ENCODE measurements at regions of chr5 and their contacts with region 1.

Region 1: GRCh38 chr5:42889311-42889933 is 77.7 kb upstream of the SELENOP start:
- DNase-seq: peak; percentile 80
- H3K4me3 ChIP-seq: no peak overlapping the region
- H3K27ac ChIP-seq: no peak overlapping the region
- H3K4me1 ChIP-seq: no peaks in the 10 kb centered on the region
- H3K27me3 ChIP-seq: no peaks in the 10 kb centered on the region
- CTCF ChIP-seq: peak; percentile 93

Region 2: GRCh38 chr5:41856644-41857491 is 1032.6 kb before region 1 on chr5:
- CTCF ChIA-PET with region 1: interaction called, 3 read pairs
- POLR2A ChIA-PET with region 1: no interaction called
- intact Hi-C with region 1: loop called (anchors 5 kb)
- DNase-seq: peak; percentile 77
- H3K4me3 ChIP-seq: no peak overlapping the region
- H3K27ac ChIP-seq: peak overlapping the region; percentile 11
- H3K4me1 ChIP-seq: no peaks in the 10 kb centered on the region
- H3K27me3 ChIP-seq: no peaks in the 10 kb centered on the region
- CTCF ChIP-seq: peak; percentile 74

Region 3: DNA sequence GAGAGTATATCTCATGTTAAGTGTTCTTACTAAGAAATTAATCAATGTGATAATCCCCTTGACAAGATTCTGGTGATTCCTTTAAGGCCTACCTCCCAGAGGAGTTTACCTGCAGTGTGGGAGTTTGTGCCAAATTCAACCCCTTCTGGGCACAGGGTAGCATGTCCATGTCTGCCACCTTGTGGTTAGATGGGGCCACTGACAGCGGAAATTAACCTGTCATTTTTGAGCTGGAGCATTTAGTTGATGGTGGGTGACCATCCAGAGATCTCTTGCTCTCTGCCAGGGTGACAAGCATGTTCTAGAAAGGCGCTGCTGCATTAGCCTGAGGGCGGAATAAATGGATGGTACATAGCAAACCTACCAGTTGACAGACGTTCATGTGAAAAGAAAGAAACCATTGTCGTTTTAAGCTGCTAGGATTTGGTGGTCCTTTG is 832.1 kb before region 1 on chr5:
- CTCF ChIA-PET with region 1: interaction called, 3 read pairs
- POLR2A ChIA-PET with region 1: no interaction called
- intact Hi-C with region 1: loop called (anchors 10 kb)
- DNase-seq: peak; percentile 58
- H3K4me3 ChIP-seq: no peak overlapping the region
- H3K27ac ChIP-seq: no peak overlapping the region
- H3K4me1 ChIP-seq: no peaks in the 10 kb centered on the region
- H3K27me3 ChIP-seq: peaks cover 11% of the 10 kb centered on the region
- CTCF ChIP-seq: peak; percentile 82

Region 4: GRCh38 chr5:42423285-42424165 is 465.9 kb before region 1 on chr5 and contains the start of gene GHR:
- CTCF ChIA-PET with region 1: interaction called, 18 read pairs
- POLR2A ChIA-PET with region 1: no interaction called
- intact Hi-C with region 1: loop called (anchors 2 kb)
- DNase-seq: peak; percentile 89
- H3K4me3 ChIP-seq: peak within 1 kb of the TSS; percentile 47
- H3K27ac ChIP-seq: no peak within 1 kb of the TSS
- H3K4me1 ChIP-seq: peaks cover 5% of the 10 kb centered on the region
- H3K27me3 ChIP-seq: peaks cover 24% of the 10 kb centered on the region
- CTCF ChIP-seq: peak; percentile 77
- total RNA-seq, gene GHR: not detected in 2 replicates

Region 5: GRCh38 chr5:42593591-42593990 is 295.8 kb before region 1 on chr5:
- CTCF ChIA-PET with region 1: no interaction called
- POLR2A ChIA-PET with region 1: no interaction called
- intact Hi-C with region 1: loop called (anchors 2 kb)
- DNase-seq: no peak
- H3K4me3 ChIP-seq: no peak overlapping the region
- H3K27ac ChIP-seq: no peak overlapping the region
- H3K4me1 ChIP-seq: no peaks in the 10 kb centered on the region
- H3K27me3 ChIP-seq: no peaks in the 10 kb centered on the region
- CTCF ChIP-seq: no peak

Region 6: GRCh38 chr5:42767491-42768105 is 121.8 kb before region 1 on chr5:
- CTCF ChIA-PET with region 1: interaction called, 5 read pairs
- POLR2A ChIA-PET with region 1: no interaction called
- intact Hi-C with region 1: loop called (anchors 10 kb)
- DNase-seq: peak; percentile 50
- H3K4me3 ChIP-seq: no peak overlapping the region
- H3K27ac ChIP-seq: no peak overlapping the region
- H3K4me1 ChIP-seq: peaks cover 1% of the 10 kb centered on the region
- H3K27me3 ChIP-seq: no peaks in the 10 kb centered on the region
- CTCF ChIP-seq: peak; percentile 65

Measured in A673 (cell line).